HEK293T (cell line): ENCODE measurements at regions of chr10 and their contacts with region 1.

Region 1: GRCh38 chr10:110354322-110354766 is 49.6 kb upstream of the SMNDC1 start:
- DNase-seq: peak; percentile 84

Region 2: GRCh38 chr10:110221721-110222261 is 132.6 kb before region 1 on chr10:
- CTCF ChIA-PET with region 1: no interaction called
- POLR2A ChIA-PET with region 1: no interaction called
- DNase-seq: peak; percentile 78

Region 3: DNA sequence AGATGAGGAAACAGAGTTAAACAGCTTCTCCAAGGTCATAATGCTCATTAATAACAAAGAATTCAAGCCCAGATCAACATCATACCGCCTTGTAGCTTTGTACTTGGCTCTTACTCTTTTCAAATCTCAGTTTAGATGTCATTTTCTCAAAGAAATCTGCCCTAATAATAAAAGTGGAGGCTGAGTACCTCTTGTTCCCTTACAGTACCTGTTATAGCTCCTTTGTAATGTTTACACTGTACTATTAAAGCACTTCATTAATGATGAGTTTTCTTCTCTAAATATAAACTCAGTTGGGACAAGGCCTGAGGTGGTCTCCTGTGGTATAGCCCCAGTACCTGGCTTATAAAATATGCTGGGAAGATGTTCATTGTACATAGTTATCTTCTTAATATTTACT is 57.4 kb before region 1 on chr10:
- CTCF ChIA-PET with region 1: no interaction called
- POLR2A ChIA-PET with region 1: no interaction called
- DNase-seq: no peak

Region 4: DNA sequence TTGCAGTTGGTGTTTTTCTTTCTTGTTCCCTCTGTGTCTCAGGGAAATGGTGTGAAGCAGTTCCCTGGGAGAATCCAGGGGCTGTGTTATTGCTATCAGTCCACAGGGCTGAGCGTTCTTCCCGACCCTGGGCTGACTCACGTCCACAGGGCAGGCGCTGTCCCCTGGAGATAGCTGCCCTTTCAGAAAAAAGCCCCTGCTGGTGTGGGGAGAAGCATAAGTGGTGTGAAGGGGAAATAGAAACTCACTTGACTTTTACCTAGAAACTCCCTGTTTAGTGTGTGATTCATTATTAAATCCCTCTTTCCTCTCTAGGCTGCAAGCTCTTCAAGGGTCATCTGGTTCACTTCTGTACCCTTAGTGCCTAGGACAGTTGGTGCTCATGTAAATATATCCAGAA is 13.7 kb after region 1 on chr10:
- CTCF ChIA-PET with region 1: interaction called, 33 read pairs
- POLR2A ChIA-PET with region 1: no interaction called
- DNase-seq: no peak

Region 5: DNA sequence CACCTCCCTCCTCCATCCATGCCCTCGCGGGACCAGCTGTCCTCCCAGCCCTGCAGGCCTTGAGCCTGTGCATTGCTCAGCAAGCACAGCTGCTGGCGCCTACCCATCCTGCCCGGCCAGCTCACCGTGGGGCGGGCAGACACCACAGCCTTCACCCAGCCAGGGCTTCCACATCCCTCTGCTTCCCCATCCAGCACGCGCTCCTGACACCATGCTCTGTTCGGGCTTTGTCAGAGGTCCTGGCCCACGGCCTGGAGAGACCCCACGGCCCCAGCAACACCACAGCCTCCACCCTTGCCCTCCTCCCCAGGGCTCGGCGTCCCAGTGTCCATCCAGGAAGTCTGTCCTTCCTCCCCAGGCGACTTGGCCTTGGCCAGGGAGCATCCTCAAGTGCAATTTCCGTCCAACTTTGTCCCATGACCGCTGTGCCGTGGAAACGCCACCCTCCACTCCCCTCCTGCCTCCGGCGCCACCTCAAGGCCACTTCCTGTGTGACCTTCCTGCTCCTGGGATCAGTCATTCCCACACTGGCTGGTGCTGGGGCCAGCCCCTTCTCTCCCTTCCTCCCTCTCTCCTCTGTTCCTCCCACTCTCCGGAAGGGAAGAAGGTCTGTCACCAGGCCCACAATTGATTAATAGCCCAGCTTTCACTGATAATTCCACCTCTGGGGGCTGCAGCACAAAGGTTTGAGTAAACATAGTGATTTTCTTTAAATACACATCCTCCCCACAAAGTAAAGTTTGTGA is 21.9 kb after region 1 on chr10:
- CTCF ChIA-PET with region 1: interaction called, 12 read pairs
- POLR2A ChIA-PET with region 1: no interaction called
- DNase-seq: no peak

Region 6: DNA sequence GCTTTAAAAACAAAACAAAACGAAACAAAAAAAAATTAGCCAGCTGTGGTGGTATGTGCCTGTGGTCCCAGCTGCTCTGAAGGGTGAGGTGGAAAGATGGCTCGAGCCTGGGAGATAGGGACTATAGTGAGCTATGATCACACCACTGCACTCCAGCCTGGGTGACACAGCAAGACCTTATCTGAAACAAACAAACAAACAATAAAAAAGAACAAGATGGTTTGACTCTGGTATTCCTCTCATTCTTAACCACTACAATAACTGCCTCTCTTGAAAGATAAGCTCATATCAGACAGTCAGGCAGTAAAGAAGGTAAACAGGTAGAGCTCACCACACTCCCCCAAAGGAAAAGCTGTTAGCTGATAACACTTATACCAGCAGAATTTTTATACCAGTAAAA is 129.3 kb after region 1 on chr10:
- CTCF ChIA-PET with region 1: no interaction called
- POLR2A ChIA-PET with region 1: no interaction called
- DNase-seq: no peak

Region 7: GRCh38 chr10:110547139-110547761 is 192.9 kb after region 1 on chr10:
- CTCF ChIA-PET with region 1: interaction called, 17 read pairs
- POLR2A ChIA-PET with region 1: no interaction called
- DNase-seq: peak; percentile 76